OCI-LY7 (cell line): ENCODE measurements at regions of chr6 and their contacts with region 1.

Region 1: DNA sequence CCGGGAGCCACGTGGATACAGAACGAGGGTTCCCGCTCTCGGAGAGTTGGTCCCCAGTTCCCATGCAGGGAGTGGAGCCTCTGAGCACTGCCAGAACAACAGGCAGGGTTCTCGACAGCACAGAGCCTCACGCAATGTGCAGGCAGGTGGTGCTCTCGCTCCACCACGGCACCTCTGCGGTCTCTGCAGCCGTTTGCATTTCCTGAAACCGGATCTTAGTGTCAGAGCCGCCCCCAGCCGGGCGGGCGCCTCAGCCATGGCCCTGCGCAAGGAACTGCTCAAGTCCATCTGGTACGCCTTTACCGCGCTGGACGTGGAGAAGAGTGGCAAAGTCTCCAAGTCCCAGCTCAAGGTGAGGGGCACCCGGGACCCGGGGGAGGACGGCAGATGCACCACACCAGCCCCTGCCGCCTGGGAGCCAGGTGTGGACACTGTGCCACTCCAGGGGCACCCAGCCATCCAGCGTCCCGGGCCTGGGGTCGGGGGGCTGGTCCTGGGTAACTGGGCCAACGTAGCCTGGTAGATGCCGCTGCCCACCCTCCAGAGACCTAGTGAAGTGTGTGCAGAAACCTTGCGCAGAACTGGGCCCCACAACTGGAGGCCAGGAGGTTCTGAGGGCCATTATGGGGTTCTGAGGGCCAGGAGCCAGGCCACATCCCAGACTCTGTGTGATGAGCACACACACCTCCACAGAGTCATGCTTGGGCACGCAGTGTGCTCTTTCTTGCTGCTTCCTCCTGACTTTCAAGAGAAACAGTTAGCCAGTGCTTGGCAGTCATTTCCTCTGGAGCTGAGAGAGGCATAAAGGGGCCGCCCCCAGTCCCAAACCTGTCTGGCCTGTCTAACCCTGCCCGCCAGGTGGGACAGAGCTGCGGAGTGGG is at the start of gene DEF6:
- DNase-seq: peak; percentile 93
- H3K4me3 ChIP-seq: peak within 1 kb of the TSS; percentile 94
- H3K27ac ChIP-seq: peak within 1 kb of the TSS; percentile 82
- H3K4me1 ChIP-seq: peaks cover 60% of the 10 kb centered on the region
- CTCF ChIP-seq: peak; percentile 90
- total RNA-seq, gene DEF6: 56.8 and 60.0 TPM in 2 replicates

Region 2: DNA sequence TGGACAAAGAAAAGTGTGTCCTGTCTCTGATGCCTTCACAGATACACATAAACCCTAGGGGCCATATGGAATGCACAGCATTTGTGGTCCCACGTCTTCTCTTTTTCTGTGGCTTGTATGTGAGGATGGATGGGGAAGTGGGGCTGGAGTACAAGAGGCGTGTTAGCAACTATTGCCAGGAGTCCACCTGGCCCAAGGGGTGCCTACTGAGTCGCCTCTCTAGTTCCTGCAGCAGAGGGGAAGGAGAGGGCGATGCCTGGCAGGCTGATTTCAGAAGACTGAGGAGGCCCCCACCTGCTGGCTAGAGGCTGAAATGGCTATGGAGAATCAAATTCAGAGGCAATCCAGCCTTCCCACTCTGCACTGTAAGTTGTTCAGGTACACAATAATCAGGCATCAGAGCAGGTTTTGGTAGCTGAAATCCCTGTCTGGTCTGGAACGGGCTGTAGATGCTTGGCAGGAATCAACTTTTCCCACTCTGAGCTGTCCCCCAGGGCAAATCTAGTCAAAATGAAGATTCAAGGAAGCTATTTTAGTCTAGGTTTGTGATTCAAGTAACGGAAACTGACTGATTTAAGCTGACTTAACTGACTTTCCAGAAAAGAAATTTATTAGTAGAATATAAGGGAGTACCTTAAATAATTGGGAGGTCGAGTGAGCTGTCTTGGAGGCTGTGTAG is 29.6 kb after region 1 on chr6:
- CTCF ChIA-PET with region 1: interaction called, 19 read pairs
- POLR2A ChIA-PET with region 1: interaction called, 5 read pairs
- intact Hi-C with region 1: loop called (anchors 1 kb)
- DNase-seq: peak; percentile 83
- H3K4me3 ChIP-seq: no peak overlapping the region
- H3K27ac ChIP-seq: peak overlapping the region; percentile 18
- H3K4me1 ChIP-seq: peaks cover 20% of the 10 kb centered on the region
- CTCF ChIP-seq: peak; percentile 87

Region 3: DNA sequence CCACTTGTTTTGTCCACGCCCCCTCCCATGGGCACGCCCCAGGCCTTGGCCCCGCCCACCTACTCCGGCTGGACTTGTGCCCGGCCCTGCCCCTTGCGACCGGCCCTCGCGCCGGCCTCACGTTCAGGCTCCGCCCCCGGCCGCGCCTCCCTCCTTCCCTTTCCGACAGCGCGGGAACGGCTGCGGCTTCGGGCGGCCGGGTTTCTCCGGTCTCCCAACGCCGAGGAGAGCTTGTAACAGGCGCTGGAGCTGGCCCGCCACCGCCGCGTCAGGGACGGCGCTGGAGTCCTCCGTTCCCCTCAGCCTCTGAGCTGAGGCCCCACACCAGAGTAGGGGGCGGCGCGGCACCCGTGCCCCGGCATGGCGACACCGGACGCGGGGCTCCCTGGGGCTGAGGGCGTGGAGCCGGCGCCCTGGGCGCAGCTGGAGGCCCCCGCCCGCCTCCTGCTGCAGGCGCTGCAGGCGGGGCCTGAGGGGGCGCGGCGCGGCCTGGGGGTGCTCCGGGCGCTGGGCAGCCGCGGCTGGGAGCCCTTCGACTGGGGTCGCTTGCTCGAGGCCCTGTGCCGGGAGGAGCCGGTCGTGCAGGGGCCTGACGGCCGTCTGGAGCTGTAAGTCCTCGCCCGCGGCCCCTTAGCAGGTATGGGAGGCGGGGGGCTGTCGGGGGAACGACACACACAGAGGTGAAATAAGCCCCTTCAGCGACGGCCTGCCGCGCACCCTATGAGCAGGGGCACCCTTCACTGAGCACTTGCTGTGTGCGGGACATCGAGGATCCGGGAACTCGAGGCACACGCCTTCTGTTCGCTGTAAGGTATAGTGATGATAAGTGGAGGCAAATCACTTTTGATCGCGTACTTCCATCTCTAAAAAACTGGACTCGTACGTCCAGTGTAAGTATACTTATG is 154.6 kb after region 1 on chr6 and contains the start of gene FANCE:
- CTCF ChIA-PET with region 1: no interaction called
- POLR2A ChIA-PET with region 1: interaction called, 5 read pairs
- intact Hi-C with region 1: loop called (anchors 1 kb)
- DNase-seq: peak; percentile 93
- H3K4me3 ChIP-seq: peak within 1 kb of the TSS; percentile 85
- H3K27ac ChIP-seq: peak within 1 kb of the TSS; percentile 48
- H3K4me1 ChIP-seq: peaks cover 32% of the 10 kb centered on the region
- CTCF ChIP-seq: no peak
- total RNA-seq, gene FANCE: 12.4 and 14.4 TPM in 2 replicates

Region 4: DNA sequence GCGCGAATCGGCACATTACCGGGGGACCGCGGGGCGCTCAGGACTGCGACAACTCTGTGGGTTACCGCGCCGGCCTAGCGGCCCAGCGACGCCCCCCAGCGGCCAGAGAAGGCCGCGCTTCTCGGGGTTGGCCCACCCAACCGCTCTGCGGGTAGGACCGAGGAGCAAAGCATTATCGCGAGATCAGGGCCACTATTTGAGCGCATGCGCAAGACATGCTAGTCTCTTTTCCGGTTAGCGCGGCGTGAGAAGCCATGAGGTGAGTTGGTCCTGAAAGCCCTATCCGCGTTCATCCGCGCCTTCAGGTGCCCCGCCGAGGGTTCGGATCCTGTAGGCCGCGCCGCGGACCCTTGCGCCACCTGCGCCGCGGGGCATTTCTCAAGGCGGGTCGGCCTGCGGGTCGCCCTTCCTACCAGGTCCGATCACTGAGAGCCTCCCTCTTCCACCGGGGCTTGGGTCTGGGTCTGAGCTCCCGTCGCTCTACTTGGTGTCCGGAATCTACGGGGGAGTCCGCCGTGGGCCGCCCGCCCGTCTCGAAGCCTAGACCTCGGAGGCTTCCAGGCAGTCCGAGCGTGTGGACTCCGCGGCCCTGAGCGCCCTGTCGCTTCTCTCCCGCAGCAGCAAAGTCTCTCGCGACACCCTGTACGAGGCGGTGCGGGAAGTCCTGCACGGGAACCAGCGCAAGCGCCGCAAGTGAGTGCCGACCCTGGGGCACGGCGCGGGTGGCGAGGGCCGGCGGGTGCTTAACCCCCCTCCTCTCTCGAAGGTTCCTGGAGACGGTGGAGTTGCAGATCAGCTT is 170.5 kb after region 1 on chr6 and contains the start of gene RPL10A:
- CTCF ChIA-PET with region 1: no interaction called
- POLR2A ChIA-PET with region 1: interaction called, 3 read pairs
- intact Hi-C with region 1: loop called (anchors 1 kb)
- DNase-seq: peak; percentile 98
- H3K4me3 ChIP-seq: peak within 1 kb of the TSS; percentile 91
- H3K27ac ChIP-seq: peak within 1 kb of the TSS; percentile 83
- H3K4me1 ChIP-seq: peaks cover 38% of the 10 kb centered on the region
- CTCF ChIP-seq: peak; percentile 95
- total RNA-seq, gene RPL10A: 2,473 and 2,643 TPM in 2 replicates

Region 5: DNA sequence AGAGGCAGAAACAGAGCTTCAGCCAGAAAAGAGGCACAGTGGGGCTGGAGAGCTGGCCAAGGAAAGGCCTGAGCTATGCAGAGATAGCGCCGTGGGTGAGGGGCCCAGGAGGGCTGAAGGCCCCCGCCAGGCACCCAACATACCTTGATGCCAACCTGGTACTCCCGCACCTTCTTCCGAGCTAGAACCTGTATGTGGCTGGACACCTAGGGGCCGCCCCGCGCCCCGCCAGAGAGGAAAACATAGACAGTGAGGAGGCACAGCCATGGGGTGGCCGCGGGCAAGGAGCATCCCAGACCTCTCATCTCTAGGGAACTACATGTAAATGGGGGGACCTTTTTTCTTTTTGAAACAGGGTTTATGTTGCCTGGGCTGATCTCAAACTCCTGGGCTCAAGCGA is 182.3 kb after region 1 on chr6:
- CTCF ChIA-PET with region 1: no interaction called
- POLR2A ChIA-PET with region 1: no interaction called
- intact Hi-C with region 1: no loop called
- DNase-seq: no peak
- H3K4me3 ChIP-seq: no peak overlapping the region
- H3K27ac ChIP-seq: no peak overlapping the region
- H3K4me1 ChIP-seq: no peaks in the 10 kb centered on the region
- CTCF ChIP-seq: no peak

Region 6: GRCh38 chr6:35552285-35552917 is 254.6 kb after region 1 on chr6:
- CTCF ChIA-PET with region 1: no interaction called
- POLR2A ChIA-PET with region 1: no interaction called
- intact Hi-C with region 1: no loop called
- DNase-seq: peak; percentile 39
- H3K4me3 ChIP-seq: no peak overlapping the region
- H3K27ac ChIP-seq: no peak overlapping the region
- H3K4me1 ChIP-seq: no peaks in the 10 kb centered on the region
- CTCF ChIP-seq: peak; percentile 95